Upper lobe of right lung (tissue), 1 donor: ENCODE measurements at regions of chr9 and their contacts with region 1.

Region 1: GRCh38 chr9:93962561-93963440 is 7.6 kb upstream of the BARX1 start:
- DNase-seq: peak; percentile 86
- ATAC-seq: peak; percentile 89
- H3K4me3 ChIP-seq: no peak overlapping the region
- H3K27ac ChIP-seq: no peak overlapping the region
- H3K4me1 ChIP-seq: peaks cover 26% of the 10 kb centered on the region
- H3K27me3 ChIP-seq: peaks cover 44% of the 10 kb centered on the region
- CTCF ChIP-seq: peak; percentile 87

Region 2: DNA sequence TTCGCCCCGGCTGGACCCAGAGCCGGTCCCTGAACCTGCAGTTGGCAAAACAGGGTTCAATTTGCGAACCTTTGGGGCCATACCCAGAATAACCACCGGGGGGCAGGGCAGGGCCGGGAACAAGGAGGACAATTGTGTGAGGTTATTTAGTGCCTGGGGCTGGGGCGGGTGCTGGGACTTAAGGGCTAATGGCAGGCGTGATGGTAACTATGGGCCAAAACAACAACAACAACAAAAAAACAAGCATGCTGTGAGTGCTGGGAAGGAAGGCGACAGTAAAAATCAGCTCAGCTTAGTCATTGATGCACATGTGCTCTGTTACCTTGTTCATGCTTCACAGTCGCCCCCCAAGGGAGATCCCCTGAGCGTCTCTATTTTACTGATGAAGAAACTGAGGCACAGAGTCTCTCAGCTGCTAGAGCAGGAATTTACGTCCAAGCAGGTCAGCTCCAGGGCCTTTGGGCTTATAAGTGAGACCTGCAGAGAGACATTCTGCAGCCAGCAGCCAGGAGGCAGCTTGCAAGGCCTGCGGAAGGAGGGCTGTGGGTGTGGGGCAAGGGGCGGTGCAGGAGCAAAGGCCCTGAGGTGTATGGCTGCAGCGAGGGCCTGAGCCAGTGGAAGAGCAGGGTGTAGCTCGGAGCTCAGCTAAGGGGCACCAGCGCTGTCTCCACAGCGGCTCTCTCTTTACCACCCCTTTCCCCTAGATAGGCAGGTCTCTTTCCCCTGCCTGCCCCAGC is 280.4 kb before region 1 on chr9:
- intact Hi-C with region 1: loop called (anchors 10 kb)
- DNase-seq: peak; percentile 79
- ATAC-seq: peak; percentile 75
- H3K4me3 ChIP-seq: no peak overlapping the region
- H3K27ac ChIP-seq: no peak overlapping the region
- H3K4me1 ChIP-seq: no peaks in the 10 kb centered on the region
- H3K27me3 ChIP-seq: no peaks in the 10 kb centered on the region
- CTCF ChIP-seq: peak; percentile 77

Region 3: GRCh38 chr9:93827545-93828330 is 135.1 kb before region 1 on chr9:
- intact Hi-C with region 1: loop called (anchors 10 kb)
- DNase-seq: peak; percentile 78
- ATAC-seq: peak; percentile 90
- H3K4me3 ChIP-seq: peak overlapping the region; percentile 32
- H3K27ac ChIP-seq: no peak overlapping the region
- H3K4me1 ChIP-seq: no peaks in the 10 kb centered on the region
- H3K27me3 ChIP-seq: peaks cover 22% of the 10 kb centered on the region
- CTCF ChIP-seq: peak; percentile 87

Region 4: DNA sequence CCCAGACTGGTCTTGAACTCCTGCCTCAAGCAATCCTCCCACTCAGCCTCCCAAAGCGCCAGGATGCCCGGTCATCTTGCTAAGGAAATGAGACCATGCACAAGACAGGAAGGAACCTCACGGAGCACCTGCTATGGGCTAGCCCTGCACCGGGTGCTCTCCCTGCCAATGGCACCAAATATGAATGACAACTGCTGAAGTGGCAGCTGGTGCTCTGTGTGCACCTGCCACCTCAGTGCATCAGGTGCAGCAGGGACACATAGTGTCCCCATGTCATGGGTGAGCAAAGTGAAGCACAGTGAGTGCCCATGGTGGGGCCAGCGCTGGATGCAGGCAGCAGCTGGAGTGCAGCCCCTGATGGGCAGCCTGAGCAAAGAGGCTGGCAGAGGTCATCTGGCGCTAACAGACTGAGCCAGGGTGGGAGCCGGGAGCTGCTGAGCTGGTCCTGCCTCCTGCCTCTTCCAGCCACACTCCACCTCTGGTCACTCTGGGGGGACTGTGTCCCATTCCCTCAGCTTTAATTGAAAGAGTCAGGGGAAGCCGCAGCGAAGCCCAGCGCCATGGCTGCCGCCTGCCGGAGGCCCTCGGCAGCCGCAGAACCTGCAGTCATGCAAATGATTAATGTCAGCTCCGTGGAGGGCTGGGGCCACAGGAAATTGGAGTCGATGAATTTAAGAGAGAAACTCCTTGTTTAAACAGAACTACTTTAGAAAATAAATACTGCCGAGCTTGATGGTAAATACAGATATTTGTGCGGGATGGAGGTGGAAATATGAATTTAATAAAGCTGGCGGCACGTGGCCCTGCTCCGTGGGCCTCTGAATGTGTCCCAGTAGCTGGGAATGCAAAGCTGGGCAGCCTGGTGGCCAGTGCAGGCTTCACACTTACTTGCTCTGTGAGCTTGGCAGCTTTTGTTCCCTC is 54.0 kb before region 1 on chr9:
- intact Hi-C with region 1: no loop called
- DNase-seq: peak; percentile 37
- ATAC-seq: no peak
- H3K4me3 ChIP-seq: no peak overlapping the region
- H3K27ac ChIP-seq: no peak overlapping the region
- H3K4me1 ChIP-seq: no peaks in the 10 kb centered on the region
- H3K27me3 ChIP-seq: peaks cover 26% of the 10 kb centered on the region
- CTCF ChIP-seq: no peak